ENCODE measurements at regions of chr3 and their contacts with region 1.

Region 1: DNA sequence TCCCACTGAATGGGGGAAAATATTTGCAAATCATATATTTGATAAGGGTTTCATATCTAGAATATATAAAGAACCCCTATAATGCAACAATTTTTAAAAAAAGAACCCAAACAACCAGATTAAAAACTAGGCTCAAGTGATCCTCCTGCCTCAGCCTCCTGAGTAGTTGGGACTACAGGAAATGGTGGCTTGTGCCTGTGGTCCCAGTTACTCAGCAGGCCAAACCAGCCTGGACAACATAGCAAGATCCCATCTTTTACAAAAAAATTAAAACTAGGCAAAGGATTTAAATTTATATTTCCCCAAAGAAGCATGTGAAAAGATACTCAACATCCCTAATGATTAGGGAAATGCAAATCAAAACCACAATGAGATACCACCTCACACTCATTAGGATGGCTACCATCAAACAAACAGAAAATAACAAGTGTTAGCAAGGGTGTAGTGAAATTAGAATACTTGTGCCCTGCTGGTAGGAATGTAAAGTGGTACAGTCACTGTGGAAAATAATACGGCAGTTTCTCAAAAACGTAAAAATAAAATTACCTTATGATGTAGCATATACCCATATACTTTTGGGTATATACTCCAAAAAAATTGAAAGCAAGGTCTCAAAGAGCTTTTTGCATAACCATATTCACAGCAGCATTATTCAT is 19.7 kb downstream of the TFDP2 start:
- DNase-seq: no peak
- H3K4me3 ChIP-seq: no peak overlapping the region
- H3K27ac ChIP-seq: no peak overlapping the region
- H3K4me1 ChIP-seq: no peaks in the 10 kb centered on the region
- H3K27me3 ChIP-seq: no peaks in the 10 kb centered on the region
- CTCF ChIP-seq: peak; percentile 16; the same call in 1 of the 2 replicates

Region 2: GRCh38 chr3:141959921-141960554 is 169.6 kb before region 1 on chr3:
- CTCF ChIA-PET with region 1: no interaction called
- POLR2A ChIA-PET with region 1: no interaction called
- intact Hi-C with region 1: loop called (anchors 10 kb)
- DNase-seq: peak; percentile 50
- H3K4me3 ChIP-seq: no peak overlapping the region
- H3K27ac ChIP-seq: peak overlapping the region; percentile 24
- H3K4me1 ChIP-seq: no peaks in the 10 kb centered on the region
- H3K27me3 ChIP-seq: no peaks in the 10 kb centered on the region
- CTCF ChIP-seq: no peak

Region 3: GRCh38 chr3:142007710-142008399 is 121.8 kb before region 1 on chr3:
- CTCF ChIA-PET with region 1: interaction called, 12 read pairs
- POLR2A ChIA-PET with region 1: no interaction called
- intact Hi-C with region 1: no loop called
- DNase-seq: no peak
- H3K4me3 ChIP-seq: no peak overlapping the region
- H3K27ac ChIP-seq: no peak overlapping the region
- H3K4me1 ChIP-seq: no peaks in the 10 kb centered on the region
- H3K27me3 ChIP-seq: no peaks in the 10 kb centered on the region
- CTCF ChIP-seq: no peak

Region 4: DNA sequence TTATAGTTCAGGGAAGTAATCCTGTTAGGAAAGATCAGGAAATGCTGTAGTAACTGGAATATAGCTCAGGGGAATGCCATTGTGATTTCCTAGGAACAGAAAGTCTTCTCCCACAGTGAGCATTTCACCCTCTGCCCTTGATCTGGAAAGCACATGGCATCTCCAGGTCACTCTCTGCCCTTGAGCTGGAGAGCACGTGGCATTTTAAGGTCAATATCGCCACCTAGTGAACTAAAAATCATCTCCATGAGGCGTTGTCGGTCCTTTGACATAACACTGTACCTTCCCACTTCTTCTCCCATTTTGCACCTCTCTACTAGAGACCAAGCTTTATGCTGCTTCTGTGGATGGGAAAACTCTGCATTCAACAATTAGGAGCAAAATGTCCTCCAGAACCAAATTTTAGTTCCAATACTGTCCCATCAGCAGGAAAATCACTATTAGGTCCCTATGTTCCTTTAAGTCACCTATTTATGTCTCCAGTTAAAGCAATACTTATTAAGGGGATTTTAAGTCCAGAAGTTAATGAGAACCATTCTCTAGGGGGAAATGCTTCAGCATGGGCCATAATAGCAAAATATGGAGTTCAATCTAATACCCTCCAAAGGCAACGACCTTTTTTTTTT is 150.4 kb after region 1 on chr3:
- CTCF ChIA-PET with region 1: interaction called, 6 read pairs
- POLR2A ChIA-PET with region 1: no interaction called
- intact Hi-C with region 1: loop called (anchors 1 kb)
- DNase-seq: peak; percentile 85
- H3K4me3 ChIP-seq: no peak overlapping the region
- H3K27ac ChIP-seq: no peak overlapping the region
- H3K4me1 ChIP-seq: no peaks in the 10 kb centered on the region
- H3K27me3 ChIP-seq: no peaks in the 10 kb centered on the region
- CTCF ChIP-seq: peak; percentile 73

Region 5: DNA sequence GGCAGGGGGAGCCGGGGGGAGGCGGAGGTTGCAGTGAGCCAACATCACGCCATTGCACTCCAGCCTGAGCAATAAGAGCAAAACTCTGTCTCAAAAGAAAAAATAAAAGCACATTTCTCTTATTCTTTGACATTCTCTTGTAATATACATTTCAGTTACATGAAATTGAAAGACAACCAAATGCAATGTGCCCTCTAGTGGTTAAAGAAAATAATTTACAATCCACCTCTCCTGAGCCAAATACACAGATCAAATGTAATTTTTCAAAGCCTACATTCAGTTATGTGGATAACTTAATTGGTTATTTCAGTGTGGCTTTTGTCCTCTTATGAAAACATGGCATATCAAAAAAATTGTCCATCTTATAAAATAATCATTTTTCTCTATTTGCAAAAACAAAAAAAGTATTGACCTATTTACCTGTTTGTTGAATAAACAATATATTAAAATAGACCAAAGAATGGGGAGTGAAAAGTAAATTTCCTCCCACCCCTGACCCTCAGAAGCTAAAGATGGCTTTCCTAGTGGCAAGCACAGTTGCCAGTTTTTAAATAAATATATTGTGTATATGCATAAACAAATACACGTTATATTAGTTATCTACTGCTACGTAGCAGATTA is 857.5 kb after region 1 on chr3:
- CTCF ChIA-PET with region 1: no interaction called
- POLR2A ChIA-PET with region 1: no interaction called
- intact Hi-C with region 1: loop called (anchors 5 kb)
- DNase-seq: peak; percentile 60
- H3K4me3 ChIP-seq: no peak overlapping the region
- H3K27ac ChIP-seq: no peak overlapping the region
- H3K4me1 ChIP-seq: no peaks in the 10 kb centered on the region
- H3K27me3 ChIP-seq: no peaks in the 10 kb centered on the region
- CTCF ChIP-seq: peak; percentile 69